ENCODE measurements at regions of chr21 and their contacts with region 1.

Region 1: GRCh38 chr21:24844671-24845070 is 762.6 kb downstream of the MRPL39 start:
- DNase-seq: no peak

Region 2: GRCh38 chr21:24076179-24076578 is 768.5 kb before region 1 on chr21:
- intact Hi-C with region 1: loop called in 1 of 2 experiments (anchors 5 kb)
- DNase-seq: no peak

Region 3: DNA sequence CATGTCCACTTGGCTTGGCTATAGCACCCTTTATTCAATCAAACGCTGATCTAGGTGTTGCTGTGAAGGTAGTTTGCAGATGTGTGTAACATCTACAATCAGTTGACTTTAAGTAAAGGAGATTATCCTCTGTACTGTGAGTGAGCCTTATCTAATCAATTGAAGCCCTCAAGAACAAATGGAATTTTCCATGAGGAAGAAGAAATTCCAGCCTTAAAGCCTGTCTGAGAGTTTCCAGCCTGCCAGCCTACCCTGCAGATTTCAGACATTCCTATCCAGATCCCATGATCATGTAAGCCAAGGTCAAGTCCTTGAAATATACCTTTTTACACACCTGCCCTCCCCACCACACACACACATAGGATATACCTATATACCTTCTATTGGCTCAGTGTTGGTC is 65.9 kb after region 1 on chr21:
- intact Hi-C with region 1: no loop called
- DNase-seq: no peak